Ovary (tissue), 10 donors: ENCODE measurements at regions of chr3 and their contacts with region 1.

Region 1: DNA sequence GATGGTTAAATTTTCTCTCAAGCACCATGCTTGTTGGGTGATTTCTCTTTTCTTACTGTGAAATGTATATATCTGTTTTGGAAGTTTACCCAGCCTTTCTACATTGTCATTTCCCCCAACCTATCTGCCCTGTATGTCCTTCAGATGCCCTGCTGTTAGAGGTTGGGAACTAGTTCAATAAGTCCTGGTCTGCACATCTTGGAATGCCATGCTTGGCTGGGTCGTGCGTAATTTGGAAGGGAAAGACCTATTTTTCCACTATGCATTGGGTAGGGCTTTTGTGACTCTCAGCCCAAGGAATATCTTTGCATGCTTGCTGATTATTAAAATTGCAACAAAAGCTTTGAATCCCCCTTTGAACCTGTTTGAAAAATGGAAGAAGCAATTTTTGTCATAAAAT is 63.8 kb downstream of the TRIM71 start:
- DNase-seq: no peak
- H3K4me3 ChIP-seq: no peak overlapping the region
- H3K27ac ChIP-seq: no peak overlapping the region
- H3K4me1 ChIP-seq: no peaks in the 10 kb centered on the region
- H3K27me3 ChIP-seq: no peaks in the 10 kb centered on the region
- CTCF ChIP-seq: no peak
- EP300 ChIP-seq: no peak
- POLR2A ChIP-seq: no peak

Region 2: DNA sequence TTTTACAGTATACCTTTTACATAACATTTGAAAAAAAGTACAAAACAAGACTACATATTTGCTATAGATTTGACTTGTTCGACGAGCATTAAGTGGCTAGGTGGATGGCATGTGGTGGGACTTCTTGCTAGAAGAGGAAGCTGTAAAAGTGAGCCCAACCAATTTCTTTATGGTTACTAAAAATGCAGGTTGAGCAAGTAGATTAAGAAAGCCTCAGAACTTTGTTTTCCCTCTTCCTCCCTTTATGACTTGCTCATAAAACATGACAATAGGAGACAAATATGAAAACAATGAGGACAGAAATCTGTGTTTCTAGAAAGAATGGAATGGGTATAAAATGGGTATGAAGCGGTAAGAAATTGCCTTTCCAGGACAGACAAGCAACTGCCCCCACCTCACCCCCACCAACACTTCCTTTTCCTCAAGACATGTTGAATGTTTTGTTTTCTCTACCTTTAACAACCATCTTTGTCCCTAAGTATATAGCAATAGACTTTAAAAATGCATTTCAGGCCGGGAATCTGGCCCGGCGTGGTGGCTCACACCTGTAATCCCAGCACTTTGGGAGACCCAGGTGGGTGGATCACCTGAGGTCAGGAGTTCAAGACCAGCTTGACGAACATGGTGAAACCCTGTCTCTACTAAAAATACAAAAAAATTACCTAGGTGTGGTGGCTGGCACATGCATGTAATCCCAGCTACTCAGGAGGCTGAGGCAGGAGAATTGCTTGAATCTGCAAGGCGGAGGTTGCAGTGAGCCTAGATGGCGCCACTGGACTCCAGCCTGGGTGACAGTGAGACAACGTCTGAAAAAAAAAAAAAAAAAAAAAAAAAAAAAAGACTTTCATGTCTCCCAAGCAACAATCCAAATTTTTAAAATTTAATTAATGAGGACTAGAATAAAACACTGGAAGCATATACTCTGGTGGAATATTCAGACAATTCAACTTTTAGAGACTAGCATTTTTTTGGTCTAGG is 20.1 kb after region 1 on chr3:
- intact Hi-C with region 1: loop called in 1 of 4 experiments (anchors 1 kb)
- DNase-seq: no peak
- H3K4me3 ChIP-seq: no peak overlapping the region
- H3K27ac ChIP-seq: no peak overlapping the region
- H3K4me1 ChIP-seq: no peaks in the 10 kb centered on the region
- H3K27me3 ChIP-seq: no peaks in the 10 kb centered on the region
- CTCF ChIP-seq: no peak
- EP300 ChIP-seq: no peak
- POLR2A ChIP-seq: no peak